CD4-positive, alpha-beta T cell (primary cell): ENCODE measurements at regions of chr12 and their contacts with region 1.

Region 1: DNA sequence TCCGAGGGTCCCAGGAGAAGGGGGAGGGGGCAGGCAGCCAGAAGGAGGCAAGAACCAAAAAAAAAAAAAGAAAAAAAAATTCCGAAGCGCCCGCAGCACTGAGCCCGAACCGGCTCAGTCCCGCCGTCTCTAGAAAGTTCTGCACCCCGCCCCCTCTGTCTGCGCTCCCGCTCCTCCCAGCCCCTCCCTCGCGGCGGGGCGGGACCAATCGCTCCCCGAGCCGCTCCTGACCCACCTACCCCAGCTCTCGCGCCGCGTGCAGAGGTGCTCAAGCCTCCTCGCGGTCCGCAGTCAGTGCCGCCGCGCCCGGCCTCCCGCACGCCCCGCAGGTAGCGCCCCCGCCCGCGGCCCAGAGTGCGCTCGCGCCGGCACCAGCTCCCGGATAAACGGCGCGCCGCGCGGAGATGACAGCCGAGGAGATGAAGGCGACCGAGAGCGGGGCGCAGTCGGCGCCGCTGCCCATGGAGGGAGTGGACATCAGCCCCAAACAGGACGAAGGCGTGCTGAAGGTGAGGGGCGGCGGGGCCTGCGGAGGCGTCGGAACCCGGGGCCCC is at the start of gene FKBP4:
- DNase-seq: peak; percentile 78 to 96 (median 86)
- ATAC-seq: peak; percentile 89
- H3K4me3 ChIP-seq: peak within 1 kb of the TSS; percentile 71
- H3K4me3 Mint-ChIP-seq: peak within 1 kb of the TSS; percentile 96
- H3K27ac ChIP-seq: peak within 1 kb of the TSS; percentile 19 to 64
- H3K27ac Mint-ChIP-seq: peak within 1 kb of the TSS; percentile 83
- H3K4me1 ChIP-seq: peaks cover 26% of the 10 kb centered on the region
- H3K4me1 Mint-ChIP-seq: peaks cover 34% of the 10 kb centered on the region
- H3K27me3 ChIP-seq: no peaks in the 10 kb centered on the region
- H3K27me3 Mint-ChIP-seq: no peaks in the 10 kb centered on the region
- CTCF ChIP-seq: no peak
- total RNA-seq, gene FKBP4: 35.7 to 40.3 TPM

Region 2: GRCh38 chr12:2691006-2691344 is 103.8 kb before region 1 on chr12:
- CTCF ChIA-PET with region 1: interaction called, 4 read pairs
- POLR2A ChIA-PET with region 1: interaction called, 48 read pairs
- intact Hi-C with region 1: no loop called
- DNase-seq: peak; percentile 19 to 82 (median 44)
- ATAC-seq: peak; percentile 67
- H3K4me3 ChIP-seq: peak overlapping the region; percentile 77
- H3K4me3 Mint-ChIP-seq: peak overlapping the region; percentile 95
- H3K27ac ChIP-seq: peak overlapping the region; percentile 50 to 83
- H3K27ac Mint-ChIP-seq: peak overlapping the region; percentile 84
- H3K4me1 ChIP-seq: peaks cover 31% of the 10 kb centered on the region
- H3K4me1 Mint-ChIP-seq: peaks cover 49% of the 10 kb centered on the region
- H3K27me3 ChIP-seq: no peaks in the 10 kb centered on the region
- H3K27me3 Mint-ChIP-seq: peaks cover 5% of the 10 kb centered on the region
- CTCF ChIP-seq: no peak

Region 3: DNA sequence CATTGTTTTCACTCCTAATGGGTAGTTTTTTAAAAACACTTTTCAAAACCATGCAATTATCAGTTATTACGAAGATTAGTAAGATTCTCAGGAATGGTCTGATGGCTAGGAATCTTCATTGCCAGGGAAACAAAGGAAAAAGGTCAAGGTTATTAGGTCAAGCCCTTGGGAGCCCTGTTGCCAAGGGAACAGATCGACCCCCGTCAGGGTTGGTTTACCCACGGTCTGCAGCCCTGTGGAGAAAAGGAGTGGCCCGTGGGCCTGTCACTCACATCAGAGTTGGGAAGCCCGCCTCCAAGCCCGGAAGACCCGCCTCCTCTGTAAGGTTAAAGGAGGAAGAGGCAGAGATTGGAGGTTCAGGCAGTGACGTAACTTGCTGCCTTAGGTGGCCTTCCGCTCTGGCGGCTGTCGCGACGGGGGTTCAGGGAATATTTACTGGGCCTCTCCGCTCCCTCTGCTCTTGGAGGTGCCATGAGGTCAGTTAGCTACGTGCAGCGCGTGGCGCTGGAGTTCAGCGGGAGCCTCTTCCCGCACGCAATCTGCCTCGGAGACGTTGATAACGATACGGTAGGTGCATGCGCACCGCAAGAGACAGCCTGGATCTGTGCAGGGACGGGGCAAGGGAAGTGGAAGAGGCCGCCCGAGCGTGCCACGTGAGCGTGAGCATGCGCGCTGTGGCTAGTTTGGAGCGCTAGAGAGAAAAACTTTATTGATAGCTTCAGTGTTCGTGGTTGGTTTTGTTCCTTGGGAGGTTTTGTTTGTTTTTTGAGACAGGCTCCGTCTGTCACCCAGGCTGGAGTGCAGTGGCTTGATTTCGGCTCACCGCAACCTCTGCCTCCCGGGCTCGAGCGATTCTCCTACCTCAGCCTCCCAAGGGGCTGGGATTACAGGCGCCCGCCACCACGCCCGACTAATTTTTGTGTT is 17.7 kb after region 1 on chr12 and contains the start of gene ITFG2:
- CTCF ChIA-PET with region 1: interaction called, 4 read pairs
- POLR2A ChIA-PET with region 1: interaction called, 37 read pairs
- intact Hi-C with region 1: loop called (anchors 1 kb)
- DNase-seq: peak; percentile 90 to 98 (median 94)
- ATAC-seq: peak; percentile 91
- H3K4me3 ChIP-seq: peak within 1 kb of the TSS; percentile 82
- H3K4me3 Mint-ChIP-seq: peak within 1 kb of the TSS; percentile 96
- H3K27ac ChIP-seq: peak within 1 kb of the TSS; percentile 91 to 93
- H3K27ac Mint-ChIP-seq: peak within 1 kb of the TSS; percentile 99
- H3K4me1 ChIP-seq: peaks cover 18% of the 10 kb centered on the region
- H3K4me1 Mint-ChIP-seq: peaks cover 37% of the 10 kb centered on the region
- H3K27me3 ChIP-seq: no peaks in the 10 kb centered on the region
- H3K27me3 Mint-ChIP-seq: no peaks in the 10 kb centered on the region
- CTCF ChIP-seq: no peak
- total RNA-seq, gene ITFG2: 61.3 to 68.5 TPM

Region 4: DNA sequence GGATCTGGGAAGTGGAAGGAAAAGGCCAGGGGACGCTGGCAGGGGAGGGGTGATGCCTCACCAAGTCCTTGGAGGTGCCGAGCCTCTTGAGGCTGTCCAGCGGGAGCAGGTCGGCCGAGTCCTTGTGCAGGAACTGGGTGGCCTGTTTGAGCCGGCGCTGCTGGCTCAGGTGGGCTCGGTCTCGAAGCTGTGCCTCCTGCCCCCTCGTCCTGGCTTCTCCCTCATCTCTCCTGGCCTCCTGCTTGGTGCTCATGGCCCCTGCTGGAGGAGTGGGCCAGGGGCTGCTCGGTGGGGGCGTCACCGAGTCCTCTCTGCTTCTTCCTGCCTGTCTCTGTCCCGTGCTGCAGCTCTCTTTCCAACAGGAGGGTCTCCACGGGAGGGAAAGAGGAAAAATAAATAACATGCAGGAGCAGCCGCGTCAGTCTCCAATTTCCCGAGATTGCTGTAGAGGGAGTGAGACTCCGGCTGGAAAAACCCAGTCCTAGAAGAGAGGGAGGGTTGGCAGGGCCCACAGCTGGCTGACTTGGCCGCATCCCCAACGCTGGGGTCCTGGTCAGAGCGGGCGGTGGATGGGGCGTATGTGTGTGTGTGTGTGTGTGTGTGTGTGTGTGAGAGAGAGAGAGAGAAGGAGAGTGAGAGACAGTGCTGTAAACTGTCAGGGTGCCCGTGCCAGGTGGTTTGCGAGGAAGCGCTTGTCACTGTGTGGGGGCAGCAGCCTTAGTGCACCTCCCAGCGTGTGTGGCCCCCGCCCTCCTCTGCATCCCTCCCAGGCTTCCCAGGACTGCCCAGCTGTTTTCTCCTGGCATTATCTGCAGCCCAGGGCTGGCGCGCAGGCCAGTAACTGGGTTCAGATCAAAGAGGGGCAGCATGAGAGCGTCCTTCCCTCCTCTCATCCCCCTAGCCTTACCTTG is 40.0 kb after region 1 on chr12 and contains the start of gene NRIP2:
- CTCF ChIA-PET with region 1: no interaction called
- POLR2A ChIA-PET with region 1: no interaction called
- intact Hi-C with region 1: no loop called
- DNase-seq: no peak
- ATAC-seq: no peak
- H3K4me3 ChIP-seq: no peak within 1 kb of the TSS
- H3K4me3 Mint-ChIP-seq: no peak within 1 kb of the TSS
- H3K27ac ChIP-seq: no peak within 1 kb of the TSS
- H3K27ac Mint-ChIP-seq: peak within 1 kb of the TSS; percentile 5
- H3K4me1 ChIP-seq: no peaks in the 10 kb centered on the region
- H3K4me1 Mint-ChIP-seq: peaks cover 12% of the 10 kb centered on the region
- H3K27me3 ChIP-seq: no peaks in the 10 kb centered on the region
- H3K27me3 Mint-ChIP-seq: no peaks in the 10 kb centered on the region
- CTCF ChIP-seq: no peak
- total RNA-seq, gene NRIP2: not detected

Region 5: GRCh38 chr12:2853626-2854025 is 58.8 kb after region 1 on chr12:
- CTCF ChIA-PET with region 1: no interaction called
- POLR2A ChIA-PET with region 1: no interaction called
- intact Hi-C with region 1: no loop called
- DNase-seq: peak; percentile 14 to 63 (median 32)
- ATAC-seq: peak; percentile 70
- H3K4me3 ChIP-seq: no peak overlapping the region
- H3K4me3 Mint-ChIP-seq: no peak overlapping the region
- H3K27ac ChIP-seq: no peak overlapping the region
- H3K27ac Mint-ChIP-seq: no peak overlapping the region
- H3K4me1 ChIP-seq: peaks cover 2% of the 10 kb centered on the region
- H3K4me1 Mint-ChIP-seq: no peaks in the 10 kb centered on the region
- H3K27me3 ChIP-seq: no peaks in the 10 kb centered on the region
- H3K27me3 Mint-ChIP-seq: no peaks in the 10 kb centered on the region
- CTCF ChIP-seq: peak; percentile 57

Region 6: DNA sequence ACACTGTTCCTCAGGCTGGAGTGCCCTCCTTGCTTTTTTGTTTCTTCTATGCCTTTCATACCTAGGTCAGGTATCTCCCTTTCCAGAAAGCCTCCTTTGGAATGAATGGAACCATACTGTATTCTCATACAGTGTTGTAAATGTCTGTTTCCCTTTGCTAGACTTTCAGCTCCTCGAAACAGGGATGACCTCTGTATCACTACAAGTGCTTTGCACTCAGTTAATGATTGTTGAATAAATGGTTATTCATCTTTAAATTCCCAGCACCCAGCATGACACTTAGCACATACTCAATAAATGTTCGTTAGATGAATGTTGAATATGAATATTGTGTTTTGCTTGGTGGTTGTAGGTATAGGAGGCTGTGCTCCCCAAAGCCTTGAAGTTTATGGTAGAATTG is 90.0 kb after region 1 on chr12:
- CTCF ChIA-PET with region 1: no interaction called
- POLR2A ChIA-PET with region 1: no interaction called
- intact Hi-C with region 1: loop called in 1 of 2 experiments (anchors 5 kb)
- DNase-seq: no peak
- ATAC-seq: no peak
- H3K4me3 ChIP-seq: no peak overlapping the region
- H3K4me3 Mint-ChIP-seq: no peak overlapping the region
- H3K27ac ChIP-seq: no peak overlapping the region
- H3K27ac Mint-ChIP-seq: no peak overlapping the region
- H3K4me1 ChIP-seq: peaks cover 12% of the 10 kb centered on the region
- H3K4me1 Mint-ChIP-seq: peaks cover 16% of the 10 kb centered on the region
- H3K27me3 ChIP-seq: no peaks in the 10 kb centered on the region
- H3K27me3 Mint-ChIP-seq: no peaks in the 10 kb centered on the region
- CTCF ChIP-seq: no peak